ENCODE measurements at regions of chr2 and their contacts with region 1.

Region 1: GRCh38 chr2:65432227-65433190 is at the start of gene SPRED2:
- DNase-seq: peak; percentile 86
- H3K4me3 Mint-ChIP-seq: peak within 1 kb of the TSS; percentile 88
- H3K27ac Mint-ChIP-seq: peak within 1 kb of the TSS; percentile 74
- H3K4me1 Mint-ChIP-seq: peaks cover 13% of the 10 kb centered on the region
- H3K27me3 Mint-ChIP-seq: peaks cover 22% of the 10 kb centered on the region
- total RNA-seq, gene SPRED2: 6.1 to 8.9 TPM

Region 2: GRCh38 chr2:64988420-64989125 is 443.9 kb before region 1 on chr2:
- CTCF ChIA-PET with region 1: no interaction called
- POLR2A ChIA-PET with region 1: no interaction called
- intact Hi-C with region 1: loop called (anchors 5 kb)
- DNase-seq: peak; percentile 81
- H3K4me3 Mint-ChIP-seq: peak overlapping the region; percentile 59
- H3K27ac Mint-ChIP-seq: peak overlapping the region; percentile 65
- H3K4me1 Mint-ChIP-seq: peaks cover 54% of the 10 kb centered on the region
- H3K27me3 Mint-ChIP-seq: peaks cover 5% of the 10 kb centered on the region

Region 3: DNA sequence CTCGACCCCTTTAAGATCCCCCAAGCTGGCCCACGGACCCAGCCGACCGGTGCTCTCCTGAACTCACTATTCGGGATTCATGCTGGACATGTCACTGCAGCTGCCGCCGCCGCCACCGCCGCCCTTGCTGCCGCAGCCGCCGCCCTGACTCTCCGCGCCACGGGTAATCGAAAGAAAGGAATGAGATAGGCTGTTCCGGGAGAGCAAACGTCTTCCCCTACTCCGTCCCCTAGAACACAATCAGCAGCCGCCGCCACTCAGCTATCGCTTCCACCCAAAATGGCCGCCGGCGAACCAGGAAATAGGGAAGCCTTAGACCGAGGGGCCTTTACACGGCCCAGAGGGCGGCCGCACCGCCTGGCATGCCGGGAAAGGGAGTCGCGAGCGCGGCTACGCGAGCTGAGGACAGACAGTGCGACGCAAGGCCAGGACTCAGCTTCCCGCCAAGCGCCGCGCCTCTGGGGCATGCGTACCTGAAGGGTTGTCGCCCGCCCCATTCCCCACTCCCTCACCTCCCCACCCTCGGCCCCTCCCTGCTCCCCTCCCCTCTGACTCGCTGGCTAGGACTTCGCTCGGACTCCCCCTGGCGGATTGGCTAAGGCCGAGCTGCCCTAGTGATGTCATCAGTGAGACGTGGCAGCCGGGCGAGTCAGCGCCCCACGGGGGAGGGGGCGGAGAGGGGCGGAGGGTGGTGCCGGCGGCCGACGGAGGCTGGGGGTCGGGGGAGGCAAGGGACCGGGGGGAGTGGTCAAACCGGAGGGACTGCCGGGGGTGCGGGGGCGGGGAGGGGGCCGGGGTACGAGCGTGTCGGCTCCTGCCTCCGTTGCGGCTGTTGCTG is 302.5 kb before region 1 on chr2 and contains the start of gene RAB1A:
- CTCF ChIA-PET with region 1: no interaction called
- POLR2A ChIA-PET with region 1: no interaction called
- intact Hi-C with region 1: loop called (anchors 2 kb)
- DNase-seq: peak; percentile 100
- H3K4me3 Mint-ChIP-seq: peak within 1 kb of the TSS; percentile 96
- H3K27ac Mint-ChIP-seq: peak within 1 kb of the TSS; percentile 95
- H3K4me1 Mint-ChIP-seq: peaks cover 34% of the 10 kb centered on the region
- H3K27me3 Mint-ChIP-seq: no peaks in the 10 kb centered on the region
- total RNA-seq, gene RAB1A: 84.3 to 84.5 TPM

Region 4: DNA sequence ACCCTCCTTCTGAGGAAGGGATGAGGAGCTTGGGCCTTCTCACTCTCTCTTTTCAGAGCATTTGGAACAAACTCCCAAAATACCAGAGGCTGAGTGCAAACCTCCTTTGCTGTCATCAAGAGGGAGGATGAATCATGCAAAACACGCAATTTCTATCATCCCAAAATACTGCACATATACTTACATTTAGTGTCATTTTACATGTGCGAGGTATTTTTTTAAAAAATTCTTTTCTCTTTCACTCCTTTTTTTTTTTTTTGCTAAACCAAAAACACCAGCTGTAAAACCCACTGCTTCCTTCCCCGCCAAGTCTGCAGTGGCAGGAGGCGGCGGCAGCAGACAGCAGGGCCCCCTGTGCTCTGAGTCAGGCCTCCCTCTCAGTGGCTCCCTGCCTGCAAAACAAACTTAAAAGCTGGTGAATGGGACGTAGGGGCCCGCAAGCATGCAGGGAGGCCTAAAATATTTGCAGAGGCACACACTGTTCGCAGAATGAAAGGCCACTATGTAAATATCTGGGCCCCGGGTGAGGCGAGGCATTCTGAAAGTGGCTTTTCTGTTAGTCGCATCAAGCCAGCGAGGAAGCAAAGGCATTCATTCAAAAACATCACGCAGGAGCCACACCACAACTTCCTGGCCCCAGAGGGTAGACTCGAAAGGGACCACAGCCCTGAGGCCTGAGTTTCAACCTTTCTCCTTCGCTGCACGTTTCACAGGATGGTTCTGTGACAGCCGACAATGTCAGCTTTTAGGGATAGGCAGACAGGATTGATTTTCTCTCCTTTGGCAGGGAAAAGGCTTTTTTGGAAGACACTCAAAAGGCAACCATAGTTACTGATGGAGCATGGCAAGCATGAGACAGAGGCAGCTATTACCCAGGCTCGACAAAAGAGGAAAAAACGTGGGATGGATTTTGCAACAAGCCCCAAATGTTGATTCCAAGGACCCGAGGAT is 131.5 kb before region 1 on chr2:
- CTCF ChIA-PET with region 1: interaction called, 7 read pairs
- POLR2A ChIA-PET with region 1: interaction called, 7 read pairs
- intact Hi-C with region 1: loop called (anchors 1 kb)
- DNase-seq: peak; percentile 87
- H3K4me3 Mint-ChIP-seq: peak overlapping the region; percentile 50
- H3K27ac Mint-ChIP-seq: peak overlapping the region; percentile 77
- H3K4me1 Mint-ChIP-seq: peaks cover 45% of the 10 kb centered on the region
- H3K27me3 Mint-ChIP-seq: peaks cover 15% of the 10 kb centered on the region

Region 5: DNA sequence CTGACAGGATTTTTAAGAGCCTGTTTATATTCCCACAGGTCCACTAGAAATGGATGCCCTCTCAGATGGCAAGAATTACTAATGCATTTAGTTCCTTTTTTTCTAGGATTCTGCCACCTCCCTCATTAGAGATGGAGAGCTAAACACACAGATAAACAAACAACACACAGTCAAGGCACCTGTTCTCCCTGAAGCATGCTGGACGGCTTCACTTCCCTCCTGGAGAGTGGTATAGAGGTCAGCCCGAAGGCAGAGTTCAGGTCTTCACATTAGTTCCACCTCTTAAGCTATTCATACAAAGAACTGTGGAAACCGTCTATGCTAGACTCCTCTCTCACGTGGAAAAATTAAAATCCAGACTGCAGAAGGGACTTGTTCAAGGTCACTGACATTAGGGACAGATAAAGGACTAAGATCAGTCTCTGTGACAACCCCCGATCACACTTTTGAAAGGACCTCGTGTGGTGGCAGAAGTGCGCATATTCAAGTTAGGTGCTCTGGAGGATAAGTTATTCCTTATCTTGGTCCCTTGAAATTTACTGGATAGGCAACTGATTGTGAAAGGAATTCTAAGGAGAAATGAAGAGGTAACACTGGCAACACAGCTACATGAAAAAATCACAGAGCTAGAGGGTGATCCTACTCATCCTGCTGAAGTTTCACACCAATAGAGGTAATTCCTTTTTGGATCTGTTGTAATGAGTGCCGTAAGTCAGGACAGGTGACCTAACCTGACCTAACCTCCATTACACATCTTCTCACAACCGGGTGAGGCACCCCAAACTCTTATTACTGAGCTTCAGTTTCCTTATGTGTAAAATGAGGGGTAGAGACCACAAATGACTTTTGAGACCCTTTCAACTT is 75.2 kb before region 1 on chr2:
- CTCF ChIA-PET with region 1: no interaction called
- POLR2A ChIA-PET with region 1: interaction called, 4 read pairs
- intact Hi-C with region 1: loop called (anchors 2 kb)
- DNase-seq: peak; percentile 27
- H3K4me3 Mint-ChIP-seq: no peak overlapping the region
- H3K27ac Mint-ChIP-seq: peak overlapping the region; percentile 28
- H3K4me1 Mint-ChIP-seq: peaks cover 34% of the 10 kb centered on the region
- H3K27me3 Mint-ChIP-seq: no peaks in the 10 kb centered on the region

Region 6: GRCh38 chr2:65416945-65417344 is 15.6 kb before region 1 on chr2:
- CTCF ChIA-PET with region 1: interaction called, 3 read pairs
- POLR2A ChIA-PET with region 1: interaction called, 3 read pairs
- intact Hi-C with region 1: loop called (anchors 1 kb)
- DNase-seq: no peak
- H3K4me3 Mint-ChIP-seq: no peak overlapping the region
- H3K27ac Mint-ChIP-seq: no peak overlapping the region
- H3K4me1 Mint-ChIP-seq: peaks cover 27% of the 10 kb centered on the region
- H3K27me3 Mint-ChIP-seq: no peaks in the 10 kb centered on the region

Region 7: GRCh38 chr2:65800998-65801397 is 368.5 kb after region 1 on chr2:
- CTCF ChIA-PET with region 1: no interaction called
- POLR2A ChIA-PET with region 1: no interaction called
- intact Hi-C with region 1: no loop called
- DNase-seq: no peak
- H3K4me3 Mint-ChIP-seq: no peak overlapping the region
- H3K27ac Mint-ChIP-seq: no peak overlapping the region
- H3K4me1 Mint-ChIP-seq: no peaks in the 10 kb centered on the region
- H3K27me3 Mint-ChIP-seq: peaks cover 2% of the 10 kb centered on the region